G401 (cell line): ENCODE measurements at regions of chr20 and their contacts with region 1.

Region 1: GRCh38 chr20:32387252-32387651 is 29.1 kb downstream of the ASXL1 start:
- DNase-seq: no peak

Region 2: GRCh38 chr20:32437391-32438074 is 50.3 kb after region 1 on chr20:
- in situ Hi-C with region 1: loop called (anchors 10 kb)
- DNase-seq: no peak